ENCODE measurements at regions of chr9 and their contacts with region 1.

Region 1: DNA sequence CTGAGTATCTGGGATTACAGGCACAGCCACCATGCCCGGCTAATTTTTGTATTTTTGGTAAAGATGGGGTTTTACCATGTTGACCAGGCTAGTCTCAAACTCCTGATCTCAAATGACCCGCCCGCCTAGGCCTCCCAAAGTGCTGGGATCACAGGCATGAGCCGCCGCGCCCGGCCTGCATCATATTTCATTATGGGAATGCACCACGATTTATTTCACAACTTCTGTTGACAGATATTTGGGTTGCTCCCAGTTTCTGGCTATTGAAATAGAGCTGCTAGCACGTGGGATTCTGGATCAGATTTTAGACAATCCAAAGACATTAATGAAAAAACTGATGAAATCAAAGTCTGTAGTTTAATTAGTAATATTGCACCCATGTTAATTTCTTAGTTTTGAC is 48.4 kb upstream of the FUBP3 start:
- DNase-seq: peak; percentile 79

Region 2: DNA sequence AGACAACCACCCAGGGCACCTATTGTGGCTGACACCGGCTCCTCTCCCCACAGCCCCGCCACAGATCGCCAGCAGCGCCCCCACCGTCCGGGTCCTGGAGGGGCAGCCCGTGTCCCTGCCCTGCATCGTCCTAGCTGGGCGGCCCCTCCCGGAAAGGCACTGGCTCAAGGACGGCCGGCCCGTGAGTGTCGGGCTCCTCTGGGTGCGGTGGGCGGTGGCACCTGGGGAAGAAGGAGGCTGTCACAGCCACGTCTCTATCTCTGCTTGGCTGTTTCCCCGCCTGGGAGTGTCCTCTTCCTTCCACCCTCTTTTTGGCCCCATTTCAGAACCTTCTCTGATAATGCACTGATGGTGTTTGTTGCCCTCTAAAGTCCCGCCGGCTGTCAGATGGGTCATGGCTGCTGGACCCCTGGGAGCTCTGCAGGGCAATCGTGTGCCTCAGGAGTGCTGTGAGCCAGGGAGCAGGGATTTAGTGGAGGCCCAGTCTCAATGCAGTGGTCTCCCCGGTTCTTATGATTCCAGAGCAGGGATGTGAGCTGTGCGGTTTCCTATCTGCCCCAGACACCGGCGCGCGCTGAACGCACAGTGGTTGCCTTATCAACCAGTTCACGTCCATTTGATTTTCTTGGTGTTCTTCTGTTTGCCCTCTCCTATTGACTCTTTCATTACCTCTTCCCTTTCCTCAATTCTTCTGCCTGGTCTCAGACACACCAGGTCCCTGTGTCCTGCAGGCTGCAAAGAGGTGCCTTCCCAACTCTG is 210.0 kb before region 1 on chr9:
- intact Hi-C with region 1: no loop called
- DNase-seq: no peak

Region 3: GRCh38 chr9:130626249-130626992 is 95.5 kb after region 1 on chr9:
- intact Hi-C with region 1: loop called (anchors 5 kb)
- DNase-seq: no peak

Measured in cardiac septum (tissue), 1 donor.